ENCODE measurements at regions of chr15 and their contacts with region 1.

Region 1: DNA sequence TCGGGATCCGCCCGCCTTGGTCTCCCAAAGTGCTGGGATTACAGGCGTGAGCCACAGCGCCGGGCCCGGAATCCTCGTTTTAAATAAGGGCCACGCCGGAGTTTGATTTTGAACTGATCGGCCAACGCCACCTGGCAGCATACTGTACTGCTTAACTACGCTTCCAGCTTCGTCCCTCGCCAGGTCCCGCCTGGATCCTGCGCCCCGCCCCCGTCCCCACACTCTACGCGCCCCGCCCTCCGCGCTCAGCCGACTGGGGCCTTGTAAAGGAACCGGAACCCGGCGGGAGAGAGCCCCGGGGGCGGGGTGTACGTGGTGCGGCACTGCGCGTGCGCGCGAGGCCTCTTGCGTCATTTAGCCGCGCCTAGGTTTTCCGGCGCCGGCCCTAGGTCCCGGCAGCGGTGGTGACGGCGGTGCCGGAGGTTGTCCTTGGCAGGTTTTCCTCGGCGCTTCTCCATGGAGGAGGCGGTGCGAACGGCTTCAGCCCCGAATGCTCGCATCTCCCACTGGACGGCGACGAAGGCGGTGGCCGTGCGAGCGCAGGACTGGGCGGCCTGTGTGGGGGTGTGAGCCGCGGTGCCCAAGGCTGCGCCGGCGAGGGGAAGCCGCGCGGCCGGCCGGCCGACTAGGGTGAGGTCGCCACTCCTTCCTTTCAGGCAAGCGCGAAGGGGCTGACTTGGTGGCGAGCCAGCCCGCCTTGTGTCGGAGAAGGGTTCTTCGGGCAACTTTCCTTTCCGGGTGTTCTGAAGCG is at the start of gene NIPA2:
- DNase-seq: peak; percentile 98
- ATAC-seq: peak; percentile 86
- H3K4me3 ChIP-seq: peak within 1 kb of the TSS; percentile 76 to 99 (median 92)
- H3K4me3 Mint-ChIP-seq: peak within 1 kb of the TSS; percentile 94
- H3K27ac ChIP-seq: peak within 1 kb of the TSS; percentile 95 to 97
- H3K27ac Mint-ChIP-seq: peak within 1 kb of the TSS; percentile 85
- H3K4me1 ChIP-seq: peaks cover 19 to 35% of the 10 kb centered on the region in 2 donors
- H3K4me1 Mint-ChIP-seq: peaks cover 28% of the 10 kb centered on the region
- H3K27me3 ChIP-seq: no peaks in the 10 kb centered on the region
- H3K27me3 Mint-ChIP-seq: no peaks in the 10 kb centered on the region
- CTCF ChIP-seq: no peak
- total RNA-seq, gene NIPA2: 65.3 and 67.2 TPM in 2 replicates

Region 2: GRCh38 chr15:22786868-22787698 is 51.4 kb before region 1 on chr15:
- CTCF ChIA-PET with region 1: interaction called, 3 read pairs
- POLR2A ChIA-PET with region 1: interaction called, 5 read pairs
- intact Hi-C with region 1: loop called (anchors 2 kb)
- DNase-seq: peak; percentile 64
- ATAC-seq: peak; percentile 6
- H3K4me3 ChIP-seq: peak overlapping the region in 4 of 5 experiments; percentile 41 to 75 (median 70)
- H3K4me3 Mint-ChIP-seq: peak overlapping the region; percentile 88
- H3K27ac ChIP-seq: peak overlapping the region in 1 of 2 donors; percentile 71
- H3K27ac Mint-ChIP-seq: peak overlapping the region; percentile 93
- H3K4me1 ChIP-seq: peaks cover 8 to 34% of the 10 kb centered on the region in 2 donors
- H3K4me1 Mint-ChIP-seq: peaks cover 31% of the 10 kb centered on the region
- H3K27me3 ChIP-seq: no peaks in the 10 kb centered on the region
- H3K27me3 Mint-ChIP-seq: no peaks in the 10 kb centered on the region
- CTCF ChIP-seq: no peak

Region 3: GRCh38 chr15:22795206-22796063 is 43.0 kb before region 1 on chr15:
- CTCF ChIA-PET with region 1: interaction called, 3 read pairs
- POLR2A ChIA-PET with region 1: interaction called, 11 read pairs
- intact Hi-C with region 1: loop called (anchors 2 kb)
- DNase-seq: no peak
- ATAC-seq: no peak
- H3K4me3 ChIP-seq: no peak overlapping the region
- H3K4me3 Mint-ChIP-seq: no peak overlapping the region
- H3K27ac ChIP-seq: peak overlapping the region in 1 of 2 donors; percentile 77
- H3K27ac Mint-ChIP-seq: peak overlapping the region; percentile 73
- H3K4me1 ChIP-seq: peaks cover 7 to 40% of the 10 kb centered on the region in 2 donors
- H3K4me1 Mint-ChIP-seq: peaks cover 55% of the 10 kb centered on the region
- H3K27me3 ChIP-seq: no peaks in the 10 kb centered on the region
- H3K27me3 Mint-ChIP-seq: no peaks in the 10 kb centered on the region
- CTCF ChIP-seq: no peak

Region 4: GRCh38 chr15:22918056-22918455 is 79.6 kb after region 1 on chr15:
- CTCF ChIA-PET with region 1: no interaction called
- POLR2A ChIA-PET with region 1: no interaction called
- intact Hi-C with region 1: no loop called
- DNase-seq: no peak
- ATAC-seq: no peak
- H3K4me3 ChIP-seq: no peak overlapping the region
- H3K4me3 Mint-ChIP-seq: no peak overlapping the region
- H3K27ac ChIP-seq: no peak overlapping the region
- H3K27ac Mint-ChIP-seq: no peak overlapping the region
- H3K4me1 ChIP-seq: no peaks in the 10 kb centered on the region
- H3K4me1 Mint-ChIP-seq: no peaks in the 10 kb centered on the region
- H3K27me3 ChIP-seq: no peaks in the 10 kb centered on the region
- H3K27me3 Mint-ChIP-seq: no peaks in the 10 kb centered on the region
- CTCF ChIP-seq: no peak

Region 5: GRCh38 chr15:22930782-22931484 is 92.5 kb after region 1 on chr15:
- CTCF ChIA-PET with region 1: no interaction called
- POLR2A ChIA-PET with region 1: no interaction called
- intact Hi-C with region 1: loop called (anchors 5 kb)
- DNase-seq: no peak
- ATAC-seq: no peak
- H3K4me3 ChIP-seq: no peak overlapping the region
- H3K4me3 Mint-ChIP-seq: no peak overlapping the region
- H3K27ac ChIP-seq: no peak overlapping the region
- H3K27ac Mint-ChIP-seq: no peak overlapping the region
- H3K4me1 ChIP-seq: peaks cover 0 to under 1% of the 10 kb centered on the region in 2 donors
- H3K4me1 Mint-ChIP-seq: peaks cover 9% of the 10 kb centered on the region
- H3K27me3 ChIP-seq: no peaks in the 10 kb centered on the region
- H3K27me3 Mint-ChIP-seq: no peaks in the 10 kb centered on the region
- CTCF ChIP-seq: no peak

Region 6: DNA sequence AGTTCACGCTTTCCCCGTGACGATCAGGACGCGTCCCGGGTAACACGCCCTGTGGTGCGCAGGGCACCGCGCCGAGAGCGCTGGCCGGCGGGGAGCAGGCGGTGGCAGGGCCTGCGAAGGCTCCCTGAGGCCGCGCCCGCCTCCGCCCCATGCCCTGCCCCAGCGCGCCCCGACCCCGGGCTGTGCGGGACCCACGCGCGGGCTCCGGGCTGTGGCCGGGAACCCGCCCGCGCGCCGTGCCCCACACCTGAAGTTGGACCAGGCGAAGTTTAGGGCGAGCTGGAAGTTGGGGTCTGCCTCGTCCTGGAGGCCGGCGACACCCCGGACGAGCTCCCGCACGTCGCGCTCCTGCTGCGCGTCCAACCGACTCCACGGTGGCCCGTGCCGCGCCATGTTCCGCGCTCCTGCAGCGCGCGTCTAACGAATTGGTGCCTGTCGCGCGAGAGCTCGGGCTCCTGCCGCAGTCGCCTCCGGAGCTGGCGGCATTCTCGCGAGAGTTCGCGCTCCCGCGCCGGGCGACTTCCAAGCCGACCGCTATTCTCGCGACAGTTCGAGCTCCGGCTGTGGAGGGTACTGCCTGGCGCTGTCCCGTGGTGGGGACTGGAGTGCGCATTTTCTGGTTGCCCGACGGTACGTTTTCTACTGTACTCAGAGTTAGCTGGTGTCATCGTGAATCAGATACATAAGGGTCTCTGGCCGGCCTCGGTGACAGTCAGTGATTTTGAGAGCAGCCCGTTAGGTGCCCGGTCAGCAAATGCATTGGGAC is 200.9 kb after region 1 on chr15 and contains the start of gene TUBGCP5:
- CTCF ChIA-PET with region 1: no interaction called
- POLR2A ChIA-PET with region 1: interaction called, 4 read pairs
- intact Hi-C with region 1: loop called (anchors 5 kb)
- DNase-seq: peak; percentile 95
- ATAC-seq: peak; percentile 94
- H3K4me3 ChIP-seq: peak within 1 kb of the TSS; percentile 42 to 75 (median 62)
- H3K4me3 Mint-ChIP-seq: peak within 1 kb of the TSS; percentile 97
- H3K27ac ChIP-seq: peak within 1 kb of the TSS; percentile 24 to 25
- H3K27ac Mint-ChIP-seq: peak within 1 kb of the TSS; percentile 91
- H3K4me1 ChIP-seq: peaks cover 8 to 10% of the 10 kb centered on the region in 2 donors
- H3K4me1 Mint-ChIP-seq: peaks cover 10% of the 10 kb centered on the region
- H3K27me3 ChIP-seq: no peaks in the 10 kb centered on the region
- H3K27me3 Mint-ChIP-seq: no peaks in the 10 kb centered on the region
- CTCF ChIP-seq: peak; percentile 35
- total RNA-seq, gene TUBGCP5: 16.9 and 23.1 TPM in 2 replicates